GM23248 (cell line): ENCODE measurements at regions of chr16 and their contacts with region 1.

Region 1: DNA sequence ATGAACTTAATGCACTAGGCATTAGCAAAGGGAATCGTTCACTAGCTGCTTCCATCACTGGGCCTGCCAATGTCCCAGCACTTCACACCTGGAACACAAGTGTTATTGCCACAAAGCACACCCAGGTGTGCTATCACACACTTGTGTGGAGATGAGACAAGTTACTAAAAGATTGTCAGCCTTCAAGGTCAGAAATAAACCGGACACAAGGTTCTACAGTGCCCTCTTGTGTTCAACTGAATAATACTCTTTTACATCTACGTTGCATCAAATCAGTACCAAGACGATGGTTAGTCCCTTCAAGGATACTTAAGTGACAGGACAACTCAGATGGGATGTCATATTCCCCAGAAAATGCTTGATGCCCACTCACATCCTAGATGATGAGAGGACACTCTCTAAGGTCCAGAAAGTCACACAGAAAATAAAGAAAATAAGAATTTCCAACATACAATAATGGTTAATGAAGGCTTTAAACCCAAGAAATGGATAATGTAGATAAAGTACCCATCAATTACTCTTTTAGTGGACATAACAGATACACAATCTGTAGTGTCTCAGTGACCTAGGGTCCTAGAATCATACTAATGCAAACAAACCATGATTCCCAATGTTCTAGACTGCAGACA is 16.4 kb upstream of the GLG1 start:
- DNase-seq: peak; percentile 68
- H3K4me3 ChIP-seq: no peak overlapping the region
- H3K27ac ChIP-seq: no peak overlapping the region
- H3K4me1 ChIP-seq: peaks cover 13% of the 10 kb centered on the region
- H3K27me3 ChIP-seq: no peaks in the 10 kb centered on the region

Region 2: DNA sequence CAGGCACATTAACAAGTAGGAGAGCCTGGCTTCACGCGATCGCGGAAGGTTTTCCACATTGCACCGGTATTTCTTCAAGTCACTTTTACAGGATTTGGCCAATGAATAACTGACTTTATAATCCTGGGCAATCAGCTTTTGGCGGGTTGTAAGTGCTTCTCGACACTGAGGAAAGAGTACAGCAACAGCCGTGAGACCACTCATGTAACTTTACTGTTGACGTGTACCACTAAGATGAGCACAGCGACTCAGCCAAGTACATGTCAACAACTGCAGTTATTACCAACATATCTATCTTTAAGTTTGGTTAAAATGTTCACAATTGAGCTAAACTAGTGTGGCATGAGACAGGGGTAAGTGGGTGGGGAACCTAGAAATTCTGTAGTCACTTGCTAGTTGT is 130.4 kb before region 1 on chr16:
- in situ Hi-C with region 1: loop called (anchors 10 kb)
- DNase-seq: no peak
- H3K4me3 ChIP-seq: no peak overlapping the region
- H3K27ac ChIP-seq: no peak overlapping the region
- H3K4me1 ChIP-seq: no peaks in the 10 kb centered on the region
- H3K27me3 ChIP-seq: no peaks in the 10 kb centered on the region

Region 3: DNA sequence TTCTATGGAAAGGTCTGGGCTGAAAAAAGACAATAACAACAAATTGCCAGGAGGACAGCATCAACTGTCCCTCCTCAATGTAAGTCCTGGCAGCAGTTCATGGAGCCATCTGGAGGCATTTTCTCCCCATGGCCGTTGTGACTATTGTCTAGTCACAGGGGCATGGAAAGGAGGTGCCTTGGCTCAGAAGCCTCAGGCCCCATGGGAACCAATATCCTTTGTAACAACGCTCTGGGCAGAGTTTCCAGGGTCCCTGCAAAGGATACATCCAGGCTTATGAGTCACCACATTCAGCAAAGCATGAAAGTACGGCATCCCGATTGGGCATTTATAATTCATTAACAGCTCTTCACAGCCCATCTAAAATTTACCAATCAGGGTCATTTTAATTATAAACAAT is 101.6 kb before region 1 on chr16:
- in situ Hi-C with region 1: no loop called
- DNase-seq: peak; percentile 83
- H3K4me3 ChIP-seq: no peak overlapping the region
- H3K27ac ChIP-seq: peak overlapping the region; percentile 56
- H3K4me1 ChIP-seq: peaks cover 11% of the 10 kb centered on the region
- H3K27me3 ChIP-seq: no peaks in the 10 kb centered on the region